ENCODE measurements at regions of chr4 and their contacts with region 1.

Region 1: DNA sequence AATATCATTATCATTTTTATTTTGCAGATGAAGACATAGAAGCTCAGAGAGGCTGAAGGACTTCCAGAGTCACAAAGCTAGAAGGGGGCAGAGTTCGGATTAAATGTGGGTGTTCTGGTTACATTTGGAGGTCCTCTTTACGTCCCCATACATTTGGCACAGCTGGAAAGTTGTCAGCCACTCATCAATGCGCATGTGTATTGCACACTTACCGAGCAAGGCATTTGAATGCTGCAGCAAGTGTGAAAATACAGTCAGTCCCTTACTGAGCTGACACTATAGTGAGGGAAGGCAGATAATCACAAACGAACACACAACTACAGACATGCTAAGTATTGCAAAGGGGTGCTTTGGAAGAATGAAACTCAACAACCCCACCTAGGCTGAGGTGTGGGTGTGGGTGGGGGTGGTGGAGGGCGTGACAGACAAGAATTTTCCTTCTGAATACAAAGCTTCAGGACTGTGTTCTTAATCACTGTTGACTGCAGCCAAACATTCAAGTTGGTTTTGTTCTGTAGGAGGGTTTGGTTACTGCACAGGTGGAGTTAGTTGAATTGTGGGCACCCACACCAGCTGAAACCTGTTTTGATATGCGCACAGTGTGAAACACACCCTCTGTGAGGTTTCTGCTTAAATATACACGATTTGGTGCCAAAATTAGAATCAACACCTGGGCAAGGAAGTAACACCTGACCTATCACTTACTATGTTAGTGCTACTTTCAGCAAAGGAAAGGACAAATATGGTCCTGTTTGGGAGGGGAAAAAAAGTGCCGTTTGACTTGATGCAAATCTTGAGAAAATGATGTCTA is 72.4 kb downstream of the COQ2 start:
- DNase-seq: peak; percentile 20 to 96 (median 44)
- ATAC-seq: peak; percentile 89
- H3K4me3 ChIP-seq: no peak overlapping the region
- H3K4me3 Mint-ChIP-seq: peak overlapping the region; percentile 55
- H3K27ac ChIP-seq: peak overlapping the region; percentile 7 to 59
- H3K27ac Mint-ChIP-seq: peak overlapping the region; percentile 81
- H3K4me1 ChIP-seq: peaks cover 67% of the 10 kb centered on the region
- H3K4me1 Mint-ChIP-seq: peaks cover 79% of the 10 kb centered on the region
- H3K27me3 ChIP-seq: no peaks in the 10 kb centered on the region
- H3K27me3 Mint-ChIP-seq: no peaks in the 10 kb centered on the region
- CTCF ChIP-seq: no peak

Region 2: DNA sequence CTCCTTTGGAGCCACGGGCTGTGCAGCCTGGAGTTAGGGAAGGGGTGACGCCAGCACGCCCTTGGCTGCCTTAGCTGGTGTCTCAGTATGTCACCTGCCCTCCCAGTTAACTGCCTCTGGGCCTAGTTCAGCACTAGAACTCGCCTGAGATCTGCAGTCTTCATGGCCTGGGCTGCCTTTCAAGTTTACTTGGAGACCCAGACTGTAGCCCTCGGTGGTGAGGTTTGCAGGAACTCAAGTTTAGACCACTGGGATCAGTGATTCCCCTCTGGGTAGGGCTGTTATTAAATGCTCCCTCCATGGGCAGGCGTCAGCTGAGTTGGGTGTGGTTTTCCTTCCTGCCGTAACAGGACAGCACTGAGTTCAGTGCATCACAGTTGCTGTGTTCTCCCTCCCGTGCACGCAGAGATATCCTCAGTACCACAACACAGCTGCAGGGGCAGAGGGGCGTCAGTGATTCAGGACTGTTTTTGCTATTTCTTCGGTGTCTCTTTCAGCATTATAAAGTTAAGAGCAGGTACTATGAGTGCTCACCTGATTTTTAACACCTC is 128.2 kb before region 1 on chr4:
- CTCF ChIA-PET with region 1: no interaction called
- POLR2A ChIA-PET with region 1: interaction called, 11 read pairs
- intact Hi-C with region 1: loop called in 1 of 2 experiments (anchors 1 kb)
- DNase-seq: peak in 12 of 14 experiments; percentile 28 to 90 (median 66)
- ATAC-seq: peak; percentile 98
- H3K4me3 ChIP-seq: no peak overlapping the region
- H3K4me3 Mint-ChIP-seq: peak overlapping the region; percentile 60
- H3K27ac ChIP-seq: peak overlapping the region; percentile 22 to 69
- H3K27ac Mint-ChIP-seq: peak overlapping the region; percentile 99
- H3K4me1 ChIP-seq: peaks cover 28% of the 10 kb centered on the region
- H3K4me1 Mint-ChIP-seq: peaks cover 57% of the 10 kb centered on the region
- H3K27me3 ChIP-seq: no peaks in the 10 kb centered on the region
- H3K27me3 Mint-ChIP-seq: no peaks in the 10 kb centered on the region
- CTCF ChIP-seq: peak; percentile 53

Region 3: GRCh38 chr4:83267121-83267829 is 55.0 kb after region 1 on chr4:
- CTCF ChIA-PET with region 1: no interaction called
- POLR2A ChIA-PET with region 1: no interaction called
- intact Hi-C with region 1: no loop called
- DNase-seq: no peak
- ATAC-seq: no peak
- H3K4me3 ChIP-seq: no peak overlapping the region
- H3K4me3 Mint-ChIP-seq: no peak overlapping the region
- H3K27ac ChIP-seq: no peak overlapping the region
- H3K27ac Mint-ChIP-seq: no peak overlapping the region
- H3K4me1 ChIP-seq: no peaks in the 10 kb centered on the region
- H3K4me1 Mint-ChIP-seq: no peaks in the 10 kb centered on the region
- H3K27me3 ChIP-seq: no peaks in the 10 kb centered on the region
- H3K27me3 Mint-ChIP-seq: no peaks in the 10 kb centered on the region
- CTCF ChIP-seq: no peak

Measured in CD4-positive, alpha-beta T cell (primary cell).